GM12878 (cell line): ENCODE measurements at regions of chr14 and their contacts with region 1.

Region 1: DNA sequence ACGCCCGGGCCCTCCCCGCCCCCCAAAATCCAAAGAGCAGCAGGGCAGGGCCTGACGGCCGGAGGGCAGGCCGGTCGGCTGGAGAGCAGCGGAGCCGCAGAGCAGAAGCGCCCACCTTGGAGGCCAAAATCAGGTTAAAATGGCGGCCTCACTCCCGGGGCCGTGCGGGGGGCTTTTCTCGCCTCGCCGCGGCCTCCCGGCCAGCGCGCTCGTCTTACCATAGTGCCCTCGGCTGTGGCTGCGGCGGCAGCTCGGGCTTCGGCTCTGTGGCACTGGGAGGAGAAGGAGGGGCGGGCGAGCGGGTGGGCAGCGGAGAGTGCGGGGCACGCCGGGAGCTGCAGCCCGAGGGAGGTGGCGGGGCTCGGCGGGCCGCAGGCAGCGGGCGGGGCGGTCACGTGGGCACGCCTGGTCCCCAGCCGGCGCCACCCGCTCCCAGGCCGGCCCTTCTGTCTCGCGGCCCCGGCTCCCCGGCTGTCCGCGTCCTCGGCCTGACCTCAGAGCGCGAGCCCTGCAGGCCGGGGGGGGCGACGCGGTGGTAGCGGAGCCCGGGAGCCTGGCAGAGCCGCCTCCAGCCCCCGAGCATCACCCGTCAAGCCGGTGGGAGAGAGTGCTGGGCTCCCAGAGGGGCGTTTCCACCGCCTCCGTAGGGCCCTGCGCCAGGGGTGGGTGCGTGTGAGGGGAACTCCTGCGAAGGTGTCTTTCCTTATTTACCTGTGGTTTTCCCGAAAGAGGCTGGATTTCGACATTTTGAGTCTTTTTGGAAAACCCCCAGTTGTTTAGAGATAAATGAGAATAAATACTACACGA is at the start of gene CFL2:
- DNase-seq: no peak
- ATAC-seq: peak; percentile 95
- H3K4me3 ChIP-seq: peak within 1 kb of the TSS; percentile 88
- H3K27ac ChIP-seq: peak within 1 kb of the TSS; percentile 85
- H3K4me1 ChIP-seq: peaks cover 16% of the 10 kb centered on the region
- H3K27me3 ChIP-seq: no peaks in the 10 kb centered on the region
- CTCF ChIP-seq: no peak
- EP300 ChIP-seq: no peak
- POLR2A ChIP-seq: peak; percentile 87
- RAD21 ChIP-seq: no peak
- polyA plus RNA-seq, gene CFL2: 6.8 to 7.6 TPM

Region 2: GRCh38 chr14:34671716-34672115 is 42.8 kb before region 1 on chr14:
- CTCF ChIA-PET with region 1: interaction called, 52 read pairs
- POLR2A ChIA-PET with region 1: no interaction called
- RAD21 ChIA-PET with region 1: interaction called, 6 read pairs
- SMC1A ChIA-PET with region 1: interaction called, 14 read pairs
- in situ Hi-C with region 1: no loop called
- intact Hi-C with region 1: no loop called
- DNase-seq: no peak
- ATAC-seq: no peak
- H3K4me3 ChIP-seq: no peak overlapping the region
- H3K27ac ChIP-seq: no peak overlapping the region
- H3K4me1 ChIP-seq: no peaks in the 10 kb centered on the region
- H3K27me3 ChIP-seq: no peaks in the 10 kb centered on the region
- CTCF ChIP-seq: no peak
- EP300 ChIP-seq: no peak
- POLR2A ChIP-seq: no peak
- RAD21 ChIP-seq: no peak

Region 3: DNA sequence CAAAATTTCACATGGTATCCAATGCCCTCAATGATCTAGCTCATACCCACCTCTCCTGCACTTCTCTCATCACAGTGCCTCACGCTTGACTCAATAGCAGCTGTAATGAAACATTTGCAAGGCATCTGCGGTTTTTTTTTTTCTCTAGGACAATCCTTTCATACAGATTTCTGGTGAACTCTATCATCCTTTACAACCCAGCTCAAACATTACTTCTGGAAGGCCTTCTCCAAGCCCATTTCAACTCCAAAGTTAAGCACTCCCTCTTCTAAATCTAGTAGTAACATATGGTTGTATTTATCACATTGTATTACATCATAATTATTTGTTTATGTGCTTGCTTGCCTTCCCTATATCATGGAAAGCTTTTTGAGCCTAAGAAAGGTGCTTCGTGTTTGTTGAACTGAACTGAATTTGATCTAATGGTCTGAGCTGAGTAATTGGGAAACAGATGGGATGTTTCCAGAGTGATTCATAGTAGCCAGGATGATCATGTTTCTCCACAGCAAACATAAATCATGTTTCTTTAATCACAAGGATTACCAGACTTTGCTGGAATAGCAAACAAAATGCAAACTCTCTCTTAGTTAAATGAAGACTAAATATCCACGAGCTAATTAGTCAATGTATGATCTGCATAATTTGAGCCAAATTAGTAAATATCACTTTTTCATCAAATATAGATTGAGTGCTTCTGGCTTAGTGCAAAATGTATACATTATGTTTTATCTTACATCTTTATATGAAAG is 14.5 kb before region 1 on chr14:
- CTCF ChIA-PET with region 1: interaction called, 5 read pairs
- POLR2A ChIA-PET with region 1: interaction called, 4 read pairs
- RAD21 ChIA-PET with region 1: interaction called, 3 read pairs
- SMC1A ChIA-PET with region 1: interaction called, 16 read pairs
- in situ Hi-C with region 1: no loop called
- intact Hi-C with region 1: no loop called
- DNase-seq: no peak
- ATAC-seq: no peak
- H3K4me3 ChIP-seq: no peak overlapping the region
- H3K27ac ChIP-seq: no peak overlapping the region
- H3K4me1 ChIP-seq: no peaks in the 10 kb centered on the region
- H3K27me3 ChIP-seq: no peaks in the 10 kb centered on the region
- CTCF ChIP-seq: no peak
- EP300 ChIP-seq: no peak
- POLR2A ChIP-seq: no peak
- RAD21 ChIP-seq: no peak

Region 4: GRCh38 chr14:35254736-35255135 is 540.2 kb after region 1 on chr14:
- CTCF ChIA-PET with region 1: no interaction called
- POLR2A ChIA-PET with region 1: interaction called, 10 read pairs
- RAD21 ChIA-PET with region 1: no interaction called
- SMC1A ChIA-PET with region 1: no interaction called
- in situ Hi-C with region 1: no loop called
- intact Hi-C with region 1: no loop called
- DNase-seq: peak; percentile 64
- ATAC-seq: peak; percentile 90
- H3K4me3 ChIP-seq: no peak overlapping the region
- H3K27ac ChIP-seq: no peak overlapping the region; the same call in 1 of the 2 replicates
- H3K4me1 ChIP-seq: peaks cover 21% of the 10 kb centered on the region
- H3K27me3 ChIP-seq: no peaks in the 10 kb centered on the region
- CTCF ChIP-seq: no peak
- EP300 ChIP-seq: 0 out of 4 replicates have a peak, but pooled peaks of 1 of the 2 experiments have one; percentile 50
- POLR2A ChIP-seq: no peak
- RAD21 ChIP-seq: no peak